Activated CD4-positive, alpha-beta T cell treated with anti-CD3 and anti-CD28 coated beads for 36 hours (primary cell): ENCODE measurements at regions of chr10 and their contacts with region 1.

Region 1: DNA sequence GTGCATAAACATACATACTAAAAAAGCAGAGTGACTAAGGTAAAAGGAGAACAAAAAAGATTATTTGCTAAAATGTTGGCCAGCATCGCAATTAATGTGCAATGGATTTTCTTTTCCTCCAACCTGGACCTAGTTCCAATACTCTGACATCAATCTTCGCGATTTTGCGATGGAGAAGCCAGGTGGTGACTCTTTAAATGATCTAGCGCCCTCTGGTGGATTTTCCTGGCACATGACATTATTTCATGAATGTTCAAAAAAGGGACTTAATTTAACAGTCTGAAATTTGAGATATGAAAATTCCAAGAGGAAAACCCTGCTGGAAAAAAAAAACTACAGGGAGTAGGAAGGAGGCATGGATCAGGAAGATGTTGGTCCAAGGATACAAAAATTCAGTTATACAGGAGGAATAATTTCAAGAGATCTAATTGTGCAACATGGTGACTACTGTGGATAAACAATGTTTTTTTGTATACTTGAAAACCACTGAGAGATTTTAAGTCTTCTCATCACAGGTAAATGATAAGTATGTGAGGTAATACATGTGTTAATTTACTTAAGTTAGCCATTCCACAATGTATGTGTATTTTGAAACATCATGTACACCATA is 4.3 kb upstream of the KCNMA1 start:
- DNase-seq: peak; percentile 69
- ATAC-seq: no peak
- H3K4me3 Mint-ChIP-seq: no peak overlapping the region
- H3K27ac Mint-ChIP-seq: no peak overlapping the region
- H3K4me1 Mint-ChIP-seq: peaks cover 2% of the 10 kb centered on the region
- H3K27me3 Mint-ChIP-seq: peaks cover 29% of the 10 kb centered on the region

Region 2: DNA sequence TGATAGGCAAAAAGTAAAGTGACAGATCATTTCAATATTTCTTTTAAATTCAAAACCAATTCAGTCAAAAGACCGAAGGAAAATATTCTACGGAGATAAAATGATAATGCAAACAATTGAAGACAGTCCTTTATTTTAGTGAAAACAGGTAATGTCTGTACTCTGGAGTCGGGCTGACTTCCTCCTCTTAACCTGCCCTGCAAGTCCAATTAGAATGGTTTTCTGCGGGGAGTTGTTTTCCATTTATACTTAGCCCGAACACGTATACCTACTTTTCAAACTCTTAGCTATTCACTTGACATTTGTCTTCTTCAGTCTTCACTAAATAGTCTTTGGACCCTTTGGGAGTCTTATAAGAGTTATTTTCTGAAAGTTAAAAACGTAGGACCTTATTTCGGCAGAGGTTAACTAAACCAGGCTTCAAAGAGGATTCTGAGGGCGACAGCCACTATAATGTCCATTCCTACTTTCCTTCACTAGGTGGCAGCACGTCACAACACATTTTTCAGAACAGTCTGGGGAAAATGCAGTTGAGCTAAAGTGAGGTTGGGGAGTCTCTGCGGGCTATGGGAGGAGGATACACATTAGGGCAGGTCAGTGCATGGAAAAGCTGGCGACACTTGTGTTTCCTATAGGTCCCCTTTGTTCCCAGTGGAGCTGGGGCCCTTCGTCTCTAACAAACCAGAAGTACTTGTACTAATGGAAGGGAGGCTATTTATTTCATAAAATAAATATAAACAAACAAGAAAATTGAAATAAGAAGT is 476.3 kb before region 1 on chr10:
- CTCF ChIA-PET with region 1: interaction called, 83 read pairs
- POLR2A ChIA-PET with region 1: no interaction called
- intact Hi-C with region 1: loop called (anchors 2 kb)
- DNase-seq: peak; percentile 55
- ATAC-seq: peak; percentile 66
- H3K4me3 Mint-ChIP-seq: no peak overlapping the region
- H3K27ac Mint-ChIP-seq: no peak overlapping the region
- H3K4me1 Mint-ChIP-seq: no peaks in the 10 kb centered on the region
- H3K27me3 Mint-ChIP-seq: peaks cover 18% of the 10 kb centered on the region

Region 3: DNA sequence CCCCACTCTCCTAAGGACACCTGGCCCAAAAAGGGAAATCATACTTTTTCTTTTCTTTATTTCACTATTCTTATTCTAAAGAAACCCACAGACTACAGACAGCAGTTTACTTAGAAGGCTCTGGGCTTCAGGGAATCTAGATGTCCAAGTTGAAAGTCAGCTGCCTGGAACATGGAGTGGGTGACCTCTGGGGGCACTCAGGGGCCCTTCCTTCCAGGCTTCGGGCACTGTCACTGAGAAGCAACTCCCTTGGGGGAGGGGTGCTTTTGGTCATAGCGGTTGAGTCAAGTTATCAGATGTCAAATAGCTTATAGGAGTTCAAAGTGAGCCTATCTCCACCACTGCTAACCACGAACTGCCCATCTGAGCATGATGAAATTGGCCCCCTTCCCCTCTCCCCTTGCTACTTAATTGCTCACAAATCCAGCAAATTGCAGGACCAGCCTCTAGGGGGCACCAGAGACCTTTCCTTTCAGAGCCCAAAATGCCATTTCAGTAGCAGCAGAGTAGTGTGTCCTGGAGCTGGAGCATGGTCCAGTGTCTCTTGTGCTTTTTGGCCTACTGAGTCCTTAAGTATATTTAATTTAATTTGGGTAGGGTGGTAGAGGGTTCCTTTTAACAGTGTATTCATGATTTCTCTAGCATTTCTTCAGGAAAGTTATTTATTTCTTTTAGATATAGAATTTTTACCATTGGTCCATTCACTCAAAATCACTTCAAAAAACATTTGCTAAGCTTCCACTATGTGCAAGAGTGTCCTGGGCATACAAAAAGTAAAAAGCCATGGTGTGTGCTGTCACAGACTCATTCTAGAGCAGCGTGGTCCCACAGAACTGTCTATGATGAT is 468.1 kb before region 1 on chr10:
- CTCF ChIA-PET with region 1: interaction called, 83 read pairs
- POLR2A ChIA-PET with region 1: no interaction called
- intact Hi-C with region 1: loop called (anchors 1 kb)
- DNase-seq: peak; percentile 82
- ATAC-seq: peak; percentile 53
- H3K4me3 Mint-ChIP-seq: no peak overlapping the region
- H3K27ac Mint-ChIP-seq: no peak overlapping the region
- H3K4me1 Mint-ChIP-seq: no peaks in the 10 kb centered on the region
- H3K27me3 Mint-ChIP-seq: peaks cover 6% of the 10 kb centered on the region

Region 4: GRCh38 chr10:77251297-77252013 is 390.4 kb before region 1 on chr10:
- CTCF ChIA-PET with region 1: no interaction called
- POLR2A ChIA-PET with region 1: no interaction called
- intact Hi-C with region 1: loop called in 1 of 2 experiments (anchors 5 kb)
- DNase-seq: peak; percentile 16
- ATAC-seq: no peak
- H3K4me3 Mint-ChIP-seq: no peak overlapping the region
- H3K27ac Mint-ChIP-seq: no peak overlapping the region
- H3K4me1 Mint-ChIP-seq: no peaks in the 10 kb centered on the region
- H3K27me3 Mint-ChIP-seq: no peaks in the 10 kb centered on the region

Region 5: DNA sequence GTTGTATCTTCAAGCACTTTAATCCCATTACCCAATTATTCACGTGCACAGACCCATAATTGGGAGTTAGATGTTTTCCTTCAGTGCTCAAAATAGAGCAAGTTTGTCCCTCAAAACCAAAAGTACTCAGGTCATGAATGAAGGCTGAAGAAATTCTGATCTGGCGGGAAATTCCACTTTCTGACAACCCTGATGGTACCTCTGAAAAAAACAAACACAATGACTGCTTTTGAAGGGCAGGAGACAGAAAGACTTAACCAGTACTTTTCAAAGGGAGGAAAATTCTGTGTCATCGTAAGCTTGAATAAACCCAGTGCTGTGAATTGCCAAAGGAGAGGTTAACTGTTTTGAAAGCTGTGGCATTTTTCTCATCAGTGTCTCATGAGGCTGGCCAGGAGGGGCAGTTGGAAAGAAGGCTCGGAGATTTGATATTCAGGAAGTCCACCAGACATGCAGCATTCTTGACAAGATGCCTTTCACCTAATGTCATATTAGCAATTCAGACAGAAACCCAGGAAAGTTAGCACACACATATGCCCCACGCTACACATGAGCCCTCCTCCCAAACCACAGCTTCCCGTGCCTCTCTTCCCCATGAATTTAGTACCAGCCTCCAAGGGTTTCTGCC is 351.3 kb before region 1 on chr10:
- CTCF ChIA-PET with region 1: no interaction called
- POLR2A ChIA-PET with region 1: no interaction called
- intact Hi-C with region 1: no loop called
- DNase-seq: no peak
- ATAC-seq: no peak
- H3K4me3 Mint-ChIP-seq: no peak overlapping the region
- H3K27ac Mint-ChIP-seq: no peak overlapping the region
- H3K4me1 Mint-ChIP-seq: no peaks in the 10 kb centered on the region
- H3K27me3 Mint-ChIP-seq: peaks cover 6% of the 10 kb centered on the region

Region 6: DNA sequence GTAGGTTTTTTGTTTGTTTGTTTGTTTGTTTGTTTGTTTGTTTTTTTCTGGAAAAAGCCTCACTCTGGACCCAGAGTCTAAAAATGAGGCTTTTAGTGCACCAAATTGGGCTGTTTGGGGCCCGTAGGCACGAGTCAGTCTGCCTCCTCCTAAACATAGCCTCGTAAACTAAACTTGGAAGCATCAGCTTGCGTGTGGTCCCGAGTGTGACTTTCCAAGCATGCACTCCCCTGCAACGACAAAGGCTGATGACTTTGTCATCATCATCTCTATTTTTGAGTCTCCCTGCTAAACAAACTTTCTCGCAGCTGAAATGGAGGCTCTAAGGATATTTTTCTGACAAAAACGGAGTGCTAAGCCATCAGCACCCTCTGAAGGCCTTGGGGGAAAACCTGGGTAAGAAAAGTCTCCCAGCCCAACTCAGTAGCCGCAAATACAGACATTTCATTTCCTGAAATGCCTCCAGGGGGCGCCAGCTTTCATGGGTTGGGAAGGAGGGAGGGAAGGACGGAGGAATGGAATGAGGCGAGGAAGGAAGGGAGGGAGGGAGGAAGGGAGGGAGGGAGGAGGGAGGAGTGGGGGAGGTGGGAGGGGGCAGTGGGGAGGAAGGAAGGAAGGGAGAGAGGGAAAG is 250.2 kb before region 1 on chr10:
- CTCF ChIA-PET with region 1: interaction called, 3 read pairs
- POLR2A ChIA-PET with region 1: no interaction called
- intact Hi-C with region 1: loop called (anchors 1 kb)
- DNase-seq: peak; percentile 60
- ATAC-seq: no peak
- H3K4me3 Mint-ChIP-seq: no peak overlapping the region
- H3K27ac Mint-ChIP-seq: no peak overlapping the region
- H3K4me1 Mint-ChIP-seq: peaks cover 3% of the 10 kb centered on the region
- H3K27me3 Mint-ChIP-seq: peaks cover 3% of the 10 kb centered on the region